Endothelial cell of umbilical vein (primary cell): ENCODE measurements at regions of chr5 and their contacts with region 1.

Region 1: GRCh38 chr5:127040796-127041520 is 10.6 kb upstream of the MARCHF3 start:
- DNase-seq: peak; percentile 87
- H3K4me3 ChIP-seq: peak overlapping the region in 1 of 3 experiments; percentile 19
- H3K27ac ChIP-seq: peak overlapping the region; percentile 87
- H3K4me1 ChIP-seq: peaks cover 33% of the 10 kb centered on the region
- H3K27me3 ChIP-seq: no peaks in the 10 kb centered on the region
- CTCF ChIP-seq: no peak
- POLR2A ChIP-seq: no peak

Region 2: DNA sequence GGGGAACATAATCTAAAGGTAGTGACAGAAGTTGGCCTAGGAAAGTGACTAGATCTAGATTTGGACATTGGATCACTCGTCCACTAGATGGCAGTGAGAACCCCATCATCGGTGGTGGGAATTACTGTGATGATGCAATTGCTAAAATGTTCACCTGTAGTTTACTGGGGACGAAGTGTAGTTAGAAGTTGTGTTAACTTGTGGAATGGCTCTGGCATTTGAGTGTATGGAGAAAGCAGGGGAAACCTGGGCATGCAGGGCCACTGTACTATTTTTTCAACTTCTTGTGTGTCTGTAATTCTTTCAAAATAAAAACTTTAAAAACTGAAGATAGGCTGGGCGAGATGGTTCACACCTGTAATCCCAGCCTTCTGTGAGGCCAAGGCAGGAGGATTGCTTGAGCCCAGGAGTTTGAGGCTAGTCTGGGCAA is 364.7 kb before region 1 on chr5:
- CTCF ChIA-PET with region 1: no interaction called
- POLR2A ChIA-PET with region 1: no interaction called
- dilution Hi-C with region 1: no loop called
- intact Hi-C with region 1: loop called (anchors 2 kb)
- DNase-seq: peak; percentile 56
- H3K4me3 ChIP-seq: no peak overlapping the region
- H3K27ac ChIP-seq: no peak overlapping the region
- H3K4me1 ChIP-seq: no peaks in the 10 kb centered on the region
- H3K27me3 ChIP-seq: peaks cover 3 to 7% of the 10 kb centered on the region in 2 experiments
- CTCF ChIP-seq: peak; percentile 72 to 75
- POLR2A ChIP-seq: no peak

Region 3: DNA sequence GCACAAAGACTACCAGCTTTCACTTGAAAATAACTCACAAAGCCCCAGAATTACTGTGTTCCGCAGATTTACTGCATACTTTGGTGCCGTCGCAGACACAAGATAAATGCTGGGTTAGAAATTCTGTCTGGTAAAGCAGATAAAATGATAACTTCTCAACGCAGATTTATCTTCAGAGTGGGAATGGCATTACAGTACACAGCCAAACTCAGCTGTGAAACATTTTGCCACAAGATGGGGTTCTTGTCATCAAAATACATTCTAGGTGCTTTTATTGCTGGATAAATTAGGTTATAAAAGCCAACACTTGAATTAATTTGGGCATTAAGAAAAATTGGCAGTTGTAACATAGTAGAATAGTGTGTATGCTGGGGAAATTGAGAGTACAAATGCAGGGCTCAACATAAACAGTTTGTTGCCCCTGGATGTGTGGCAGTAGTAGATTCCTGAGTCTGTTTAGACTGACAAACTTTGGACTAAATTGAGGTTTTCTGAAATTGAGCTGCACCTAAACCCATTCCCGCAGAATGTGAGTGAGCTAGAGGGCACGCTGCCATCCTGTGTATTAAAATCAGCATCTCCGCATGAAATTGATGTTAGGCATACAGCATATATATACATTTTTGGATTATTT is 202.9 kb before region 1 on chr5:
- CTCF ChIA-PET with region 1: interaction called, 16 read pairs
- POLR2A ChIA-PET with region 1: no interaction called
- dilution Hi-C with region 1: no loop called
- intact Hi-C with region 1: loop called (anchors 2 kb)
- DNase-seq: peak; percentile 54
- H3K4me3 ChIP-seq: no peak overlapping the region
- H3K27ac ChIP-seq: no peak overlapping the region
- H3K4me1 ChIP-seq: no peaks in the 10 kb centered on the region
- H3K27me3 ChIP-seq: no peaks in the 10 kb centered on the region
- CTCF ChIP-seq: peak; percentile 8 to 34
- POLR2A ChIP-seq: no peak

Region 4: DNA sequence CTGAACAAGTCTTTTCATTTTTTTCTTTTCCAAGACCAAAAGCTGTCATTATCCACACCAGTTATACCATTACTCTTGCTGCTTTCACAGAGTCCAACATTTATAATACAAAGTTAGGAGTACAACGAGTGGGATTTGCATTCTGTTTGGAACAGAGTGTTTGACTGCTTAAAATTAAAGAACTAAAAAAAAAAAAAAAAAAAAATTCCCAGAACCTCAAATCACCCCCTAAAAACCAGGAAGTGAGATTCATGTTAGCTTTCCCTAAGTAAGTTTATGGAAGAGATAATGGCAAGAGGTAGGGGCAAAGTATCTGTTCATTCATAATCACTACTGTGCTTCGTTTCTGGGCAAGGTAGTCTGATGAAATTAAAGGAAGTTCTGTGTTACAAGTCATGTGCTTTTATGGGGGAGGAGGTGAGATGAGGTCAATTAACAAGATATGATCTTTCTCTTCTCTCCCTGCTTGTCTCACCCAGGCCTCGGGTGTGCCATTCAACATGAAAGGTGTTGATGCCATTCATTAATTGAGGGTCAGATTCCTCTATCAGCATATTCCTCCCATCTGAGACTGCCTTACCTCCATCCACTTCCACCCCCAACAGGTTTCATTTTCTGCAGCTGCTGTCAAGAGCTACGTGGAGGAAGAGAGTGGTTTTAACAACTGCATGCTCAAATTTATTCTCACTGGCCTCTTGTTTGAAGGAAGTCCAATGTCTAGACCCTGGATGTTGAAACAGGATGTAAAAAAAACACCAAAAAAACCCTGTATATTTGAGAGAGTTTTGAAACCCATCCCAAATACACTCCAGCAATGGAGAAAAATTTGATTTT is 68.7 kb before region 1 on chr5:
- CTCF ChIA-PET with region 1: no interaction called
- POLR2A ChIA-PET with region 1: no interaction called
- dilution Hi-C with region 1: no loop called
- intact Hi-C with region 1: loop called (anchors 1 kb)
- DNase-seq: peak; percentile 42
- H3K4me3 ChIP-seq: no peak overlapping the region
- H3K27ac ChIP-seq: no peak overlapping the region
- H3K4me1 ChIP-seq: peaks cover 27% of the 10 kb centered on the region
- H3K27me3 ChIP-seq: no peaks in the 10 kb centered on the region
- CTCF ChIP-seq: no peak
- POLR2A ChIP-seq: no peak

Region 5: GRCh38 chr5:127030259-127031146 is 10.5 kb before region 1 on chr5 and contains the start of gene MARCHF3:
- CTCF ChIA-PET with region 1: interaction called, 6 read pairs
- POLR2A ChIA-PET with region 1: interaction called, 3 read pairs
- dilution Hi-C with region 1: no loop called
- intact Hi-C with region 1: loop called (anchors 1 kb)
- DNase-seq: peak; percentile 98
- H3K4me3 ChIP-seq: peak within 1 kb of the TSS; percentile 83 to 93 (median 88)
- H3K27ac ChIP-seq: peak within 1 kb of the TSS; percentile 78
- H3K4me1 ChIP-seq: peaks cover 11% of the 10 kb centered on the region
- H3K27me3 ChIP-seq: no peaks in the 10 kb centered on the region
- CTCF ChIP-seq: peak in 1 of 2 donors; percentile 25
- POLR2A ChIP-seq: peak; percentile 94
- total RNA-seq, gene MARCHF3: 31.7 and 31.9 TPM in 2 replicates

Region 6: GRCh38 chr5:127229185-127229889 is 188.4 kb after region 1 on chr5:
- CTCF ChIA-PET with region 1: no interaction called
- POLR2A ChIA-PET with region 1: no interaction called
- dilution Hi-C with region 1: no loop called
- intact Hi-C with region 1: loop called (anchors 1 kb)
- DNase-seq: peak; percentile 49
- H3K4me3 ChIP-seq: peak overlapping the region; percentile 28 to 40 (median 40)
- H3K27ac ChIP-seq: no peak overlapping the region
- H3K4me1 ChIP-seq: peaks cover 8% of the 10 kb centered on the region
- H3K27me3 ChIP-seq: no peaks in the 10 kb centered on the region
- CTCF ChIP-seq: peak in 1 of 2 donors; percentile 50
- POLR2A ChIP-seq: no peak